ENCODE measurements at regions of chr17 and their contacts with region 1.

Region 1: GRCh38 chr17:75289115-75289831 is at the start of gene SLC25A19:
- DNase-seq: peak; percentile 94 to 98
- H3K4me3 ChIP-seq: peak within 1 kb of the TSS; percentile 77 to 94 (median 82)
- H3K27ac ChIP-seq: no peak within 1 kb of the TSS
- H3K4me1 ChIP-seq: no peaks in the 10 kb centered on the region; a peak in 3 of 7 replicates
- H3K27me3 ChIP-seq: no peaks in the 10 kb centered on the region; a peak in 2 of 7 replicates
- CTCF ChIP-seq: peak; percentile 57 to 83 (median 69)
- EP300 ChIP-seq: no peak
- POLR2A ChIP-seq: peak in 1 of 2 experiments; percentile 83; a peak in 2 of 3 replicates
- RAD21 ChIP-seq: peak; percentile 63 to 72
- total RNA-seq, gene SLC25A19: 28.6 and 33.3 TPM in 2 replicates

Region 2: GRCh38 chr17:75096082-75096625 is 193.1 kb before region 1 on chr17:
- CTCF ChIA-PET with region 1: no interaction called
- POLR2A ChIA-PET with region 1: no interaction called
- DNase-seq: no peak
- H3K4me3 ChIP-seq: no peak overlapping the region
- H3K27ac ChIP-seq: no peak overlapping the region
- H3K4me1 ChIP-seq: peaks cover 0 to 13% (median 8%) of the 10 kb centered on the region in 4 experiments; a peak in 6 of 7 replicates
- H3K27me3 ChIP-seq: no peaks in the 10 kb centered on the region
- CTCF ChIP-seq: no peak
- EP300 ChIP-seq: no peak
- POLR2A ChIP-seq: no peak
- RAD21 ChIP-seq: no peak

Region 3: DNA sequence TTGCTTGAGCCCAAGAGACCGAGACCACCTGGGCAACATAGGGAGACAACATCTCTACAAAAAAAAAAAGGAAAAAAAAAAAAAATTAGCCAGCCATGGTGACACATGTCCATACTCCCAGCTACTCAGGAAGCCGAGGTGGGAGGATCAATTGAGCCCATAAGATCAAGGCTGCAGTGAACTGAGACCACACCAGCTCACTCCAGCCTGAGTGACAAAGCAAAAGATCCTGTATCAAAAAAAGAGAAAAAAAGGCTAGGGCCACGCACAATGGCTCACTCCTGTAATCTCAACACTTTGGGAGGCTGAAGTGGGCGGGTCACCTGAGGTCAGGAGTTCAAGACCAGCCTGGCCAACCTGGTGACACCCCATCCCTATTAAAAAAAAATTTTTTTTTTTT is 120.3 kb before region 1 on chr17:
- CTCF ChIA-PET with region 1: no interaction called
- POLR2A ChIA-PET with region 1: no interaction called
- DNase-seq: no peak
- H3K4me3 ChIP-seq: no peak overlapping the region
- H3K27ac ChIP-seq: no peak overlapping the region
- H3K4me1 ChIP-seq: no peaks in the 10 kb centered on the region; a peak in 1 of 7 replicates
- H3K27me3 ChIP-seq: no peaks in the 10 kb centered on the region
- CTCF ChIP-seq: no peak
- EP300 ChIP-seq: no peak
- POLR2A ChIP-seq: no peak
- RAD21 ChIP-seq: no peak

Region 4: DNA sequence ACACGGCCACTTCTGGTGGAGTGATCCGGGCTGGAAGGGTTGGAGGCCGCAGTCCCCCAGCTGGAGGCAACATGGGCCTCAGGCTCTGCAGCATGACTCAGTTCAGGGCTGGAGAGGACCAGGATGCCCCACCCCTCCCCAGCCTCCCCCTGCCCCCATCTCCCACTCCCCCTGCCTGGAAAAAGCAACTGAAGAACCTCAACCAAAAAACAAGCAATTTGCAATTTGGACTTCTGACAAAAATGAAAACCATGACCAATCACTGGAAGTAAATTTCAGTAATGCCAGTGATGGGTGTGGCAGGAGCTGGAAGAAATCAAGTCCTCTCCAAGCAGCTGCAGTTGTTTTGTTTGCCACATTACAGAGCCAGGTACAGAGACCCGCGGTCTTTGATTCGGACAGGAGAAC is 11.6 kb before region 1 on chr17:
- CTCF ChIA-PET with region 1: interaction called, 19 read pairs
- POLR2A ChIA-PET with region 1: interaction called, 11 read pairs
- DNase-seq: no peak
- H3K4me3 ChIP-seq: no peak overlapping the region
- H3K27ac ChIP-seq: no peak overlapping the region
- H3K4me1 ChIP-seq: no peaks in the 10 kb centered on the region
- H3K27me3 ChIP-seq: no peaks in the 10 kb centered on the region
- CTCF ChIP-seq: no peak
- EP300 ChIP-seq: no peak
- POLR2A ChIP-seq: no peak
- RAD21 ChIP-seq: no peak

Measured in H1 (cell line).